ENCODE measurements at regions of chr18 and their contacts with region 1.

Region 1: GRCh38 chr18:28407681-28408080 is 230.8 kb upstream of the CDH2 start:
- DNase-seq: no peak
- ATAC-seq: no peak
- H3K4me3 ChIP-seq: no peak overlapping the region
- H3K27ac ChIP-seq: no peak overlapping the region
- H3K4me1 ChIP-seq: no peaks in the 10 kb centered on the region
- H3K27me3 ChIP-seq: no peaks in the 10 kb centered on the region
- CTCF ChIP-seq: no peak

Region 2: DNA sequence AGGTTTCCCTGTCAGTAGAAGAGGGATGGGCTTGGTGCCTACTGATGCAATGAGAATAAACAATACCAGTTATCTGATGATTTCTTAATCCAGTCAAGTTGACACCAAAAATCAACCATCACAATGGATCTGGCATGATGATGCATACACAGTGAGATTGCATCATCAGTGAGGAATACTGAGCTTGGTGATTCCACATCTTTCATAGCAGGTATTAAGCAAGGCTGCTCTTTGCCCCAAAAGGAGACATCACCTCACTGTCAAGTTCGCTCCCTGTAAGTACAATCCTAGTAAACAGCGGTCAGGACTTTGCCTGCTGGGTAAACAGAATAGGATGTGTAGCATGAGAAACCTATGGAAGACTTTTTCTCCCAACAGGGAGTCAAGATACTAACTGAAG is 51.9 kb after region 1 on chr18:
- intact Hi-C with region 1: loop called in 1 of 3 experiments (anchors 10 kb)
- DNase-seq: no peak
- ATAC-seq: no peak
- H3K4me3 ChIP-seq: no peak overlapping the region
- H3K27ac ChIP-seq: no peak overlapping the region
- H3K4me1 ChIP-seq: no peaks in the 10 kb centered on the region
- H3K27me3 ChIP-seq: no peaks in the 10 kb centered on the region
- CTCF ChIP-seq: no peak